Cardiac septum (tissue), 1 donor: ENCODE measurements at regions of chr2 and their contacts with region 1.

Region 1: DNA sequence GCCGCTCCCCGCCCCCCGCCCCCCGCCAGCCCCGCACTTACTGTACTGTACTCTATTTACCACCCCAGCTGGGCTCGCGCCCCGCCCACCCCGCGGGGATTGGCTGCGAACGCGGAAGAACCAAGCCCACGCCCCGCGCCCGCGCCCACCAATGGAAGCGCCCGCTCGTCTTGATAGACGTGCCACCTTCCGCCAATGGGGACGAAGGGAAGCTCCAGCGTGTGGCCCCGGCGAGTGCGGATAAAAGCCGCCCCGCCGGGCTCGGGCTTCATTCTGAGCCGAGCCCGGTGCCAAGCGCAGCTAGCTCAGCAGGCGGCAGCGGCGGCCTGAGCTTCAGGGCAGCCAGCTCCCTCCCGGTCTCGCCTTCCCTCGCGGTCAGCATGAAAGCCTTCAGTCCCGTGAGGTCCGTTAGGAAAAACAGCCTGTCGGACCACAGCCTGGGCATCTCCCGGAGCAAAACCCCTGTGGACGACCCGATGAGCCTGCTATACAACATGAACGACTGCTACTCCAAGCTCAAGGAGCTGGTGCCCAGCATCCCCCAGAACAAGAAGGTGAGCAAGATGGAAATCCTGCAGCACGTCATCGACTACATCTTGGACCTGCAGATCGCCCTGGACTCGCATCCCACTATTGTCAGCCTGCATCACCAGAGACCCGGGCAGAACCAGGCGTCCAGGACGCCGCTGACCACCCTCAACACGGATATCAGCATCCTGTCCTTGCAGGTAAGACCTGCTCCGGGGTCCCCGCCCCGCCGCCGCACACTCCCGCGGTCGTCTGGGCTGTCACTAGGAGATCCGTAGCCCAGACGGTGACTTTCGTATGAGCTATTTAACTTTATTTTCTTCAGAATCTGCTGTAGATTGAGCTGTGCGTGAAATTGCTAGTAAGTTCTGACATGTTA is at the start of gene ID2:
- DNase-seq: peak; percentile 99
- total RNA-seq, gene ID2: 35.1 TPM

Region 2: DNA sequence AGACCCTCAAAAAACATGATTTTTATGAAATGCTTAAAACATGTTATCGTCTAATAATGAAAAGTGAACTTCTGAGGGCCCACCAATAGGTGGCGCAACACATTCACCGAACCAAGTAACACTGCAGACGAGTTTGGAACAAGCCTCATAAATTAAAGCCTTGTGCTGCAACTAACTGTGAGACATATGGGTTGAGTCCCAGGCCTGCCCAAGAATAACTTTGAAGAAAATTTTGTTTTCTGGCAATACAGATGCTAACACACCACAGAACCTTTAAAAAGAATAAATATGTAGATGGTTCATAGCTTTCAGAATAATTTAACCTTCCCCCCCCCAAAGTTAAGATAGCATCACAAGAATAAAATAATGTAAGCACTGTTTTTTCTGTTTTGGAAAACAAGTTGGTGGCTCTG is 1479.0 kb before region 1 on chr2:
- intact Hi-C with region 1: loop called (anchors 2 kb)
- DNase-seq: no peak

Region 3: DNA sequence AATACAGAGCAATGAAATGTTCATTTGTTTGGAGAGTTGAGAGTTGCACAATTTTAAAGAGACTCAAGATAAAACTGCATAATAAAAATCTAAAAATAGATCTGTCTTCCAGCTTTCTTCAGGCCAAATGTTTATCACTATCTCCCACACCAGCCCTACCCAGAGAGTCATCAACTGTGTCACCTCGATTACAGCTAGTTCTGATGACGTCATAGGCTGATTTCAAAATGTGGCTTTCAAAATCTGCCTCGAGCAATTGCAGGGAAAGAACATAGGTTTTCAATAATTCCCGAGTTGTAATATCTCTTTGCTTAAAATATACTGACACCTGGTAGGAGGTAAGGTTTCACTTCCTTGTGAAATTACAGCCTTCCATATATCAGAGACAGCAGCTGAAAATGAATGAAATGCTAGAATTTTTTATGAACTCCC is 677.8 kb before region 1 on chr2:
- intact Hi-C with region 1: loop called (anchors 5 kb)
- DNase-seq: no peak

Region 4: GRCh38 chr2:8303322-8303832 is 378.7 kb before region 1 on chr2:
- intact Hi-C with region 1: loop called (anchors 10 kb)
- DNase-seq: no peak

Region 5: DNA sequence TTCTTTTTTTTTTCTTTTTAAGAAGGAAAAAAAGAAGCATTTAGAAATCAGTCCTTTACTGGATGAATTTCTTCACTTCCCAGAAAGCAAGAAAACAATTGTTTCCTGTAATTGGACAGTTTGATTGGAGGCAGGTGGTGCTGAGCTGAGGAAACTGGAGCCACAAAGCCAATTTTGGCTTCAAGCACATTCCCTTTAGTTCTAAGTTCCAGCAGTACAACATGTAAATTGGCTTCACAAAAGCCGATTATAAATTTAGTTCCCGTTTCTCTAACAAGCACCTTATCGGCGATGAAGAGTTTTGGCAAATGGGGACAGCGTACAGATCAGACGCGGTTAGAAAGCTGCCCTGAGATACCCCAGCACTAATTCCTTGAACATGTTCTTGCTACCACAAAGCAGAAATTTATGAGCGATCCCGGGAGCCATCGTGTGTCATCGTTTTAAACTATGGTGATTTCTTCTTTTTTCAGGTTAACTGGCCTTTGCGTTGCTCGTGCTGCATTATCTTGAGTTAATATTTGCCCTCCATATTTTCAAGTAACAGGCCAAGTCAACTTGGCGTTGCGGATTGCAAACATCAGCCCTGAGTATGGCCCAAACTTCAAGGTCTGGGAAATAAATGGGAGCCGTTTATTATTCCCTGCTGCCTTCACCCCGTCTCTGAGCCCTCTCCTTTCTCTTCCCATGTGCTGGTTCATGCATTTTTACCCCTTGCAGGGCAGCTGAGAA is 190.6 kb before region 1 on chr2:
- intact Hi-C with region 1: loop called (anchors 5 kb)
- DNase-seq: no peak

Region 6: GRCh38 chr2:8693155-8693821 is 11.2 kb after region 1 on chr2:
- intact Hi-C with region 1: no loop called
- DNase-seq: no peak